ENCODE measurements at regions of chr1 and their contacts with region 1.

Region 1: DNA sequence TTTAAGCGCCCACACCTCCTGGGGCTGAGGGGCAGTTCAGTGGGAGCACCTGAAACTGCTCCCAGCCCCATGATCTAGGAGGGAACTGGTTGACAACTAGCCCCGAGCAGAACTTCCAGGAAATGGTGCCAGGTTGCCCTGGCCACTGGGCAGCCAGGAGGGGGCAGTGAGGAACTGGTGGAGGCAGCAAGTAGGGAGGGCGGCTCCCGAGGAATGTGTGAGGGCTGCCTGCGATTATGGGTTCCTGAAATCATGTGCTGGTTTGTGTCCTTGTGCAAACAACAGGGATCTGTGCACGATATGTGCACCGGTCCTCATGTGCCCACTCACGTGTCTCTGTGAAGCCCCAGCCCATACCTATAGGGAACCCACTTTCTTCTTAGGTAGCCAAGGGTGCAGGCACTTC is 9.9 kb downstream of the GPR3 start:
- DNase-seq: no peak
- H3K4me3 ChIP-seq: no peak overlapping the region
- H3K4me3 Mint-ChIP-seq: no peak overlapping the region
- H3K27ac Mint-ChIP-seq: no peak overlapping the region
- H3K4me1 ChIP-seq: peaks cover 8% of the 10 kb centered on the region; the same call in 1 of the 2 replicates
- H3K4me1 Mint-ChIP-seq: peaks cover 6% of the 10 kb centered on the region
- H3K27me3 ChIP-seq: no peaks in the 10 kb centered on the region
- H3K27me3 Mint-ChIP-seq: no peaks in the 10 kb centered on the region
- CTCF ChIP-seq: no peak

Region 2: GRCh38 chr1:26959722-26960615 is 442.4 kb before region 1 on chr1 and contains the start of gene KDF1:
- CTCF ChIA-PET with region 1: interaction called, 8 read pairs
- POLR2A ChIA-PET with region 1: interaction called, 13 read pairs
- intact Hi-C with region 1: no loop called
- DNase-seq: peak; percentile 87 to 92
- H3K4me3 ChIP-seq: peak within 1 kb of the TSS; percentile 90
- H3K4me3 Mint-ChIP-seq: peak within 1 kb of the TSS; percentile 84
- H3K27ac Mint-ChIP-seq: peak within 1 kb of the TSS; percentile 89
- H3K4me1 ChIP-seq: 0 out of 2 replicates have a peak, but pooled peaks cover 2% of the 10 kb centered on the region
- H3K4me1 Mint-ChIP-seq: no peaks in the 10 kb centered on the region
- H3K27me3 ChIP-seq: no peaks in the 10 kb centered on the region
- H3K27me3 Mint-ChIP-seq: no peaks in the 10 kb centered on the region
- CTCF ChIP-seq: peak; percentile 44 to 48
- total RNA-seq, gene KDF1: 13.5 and 14.1 TPM in 2 replicates

Region 3: DNA sequence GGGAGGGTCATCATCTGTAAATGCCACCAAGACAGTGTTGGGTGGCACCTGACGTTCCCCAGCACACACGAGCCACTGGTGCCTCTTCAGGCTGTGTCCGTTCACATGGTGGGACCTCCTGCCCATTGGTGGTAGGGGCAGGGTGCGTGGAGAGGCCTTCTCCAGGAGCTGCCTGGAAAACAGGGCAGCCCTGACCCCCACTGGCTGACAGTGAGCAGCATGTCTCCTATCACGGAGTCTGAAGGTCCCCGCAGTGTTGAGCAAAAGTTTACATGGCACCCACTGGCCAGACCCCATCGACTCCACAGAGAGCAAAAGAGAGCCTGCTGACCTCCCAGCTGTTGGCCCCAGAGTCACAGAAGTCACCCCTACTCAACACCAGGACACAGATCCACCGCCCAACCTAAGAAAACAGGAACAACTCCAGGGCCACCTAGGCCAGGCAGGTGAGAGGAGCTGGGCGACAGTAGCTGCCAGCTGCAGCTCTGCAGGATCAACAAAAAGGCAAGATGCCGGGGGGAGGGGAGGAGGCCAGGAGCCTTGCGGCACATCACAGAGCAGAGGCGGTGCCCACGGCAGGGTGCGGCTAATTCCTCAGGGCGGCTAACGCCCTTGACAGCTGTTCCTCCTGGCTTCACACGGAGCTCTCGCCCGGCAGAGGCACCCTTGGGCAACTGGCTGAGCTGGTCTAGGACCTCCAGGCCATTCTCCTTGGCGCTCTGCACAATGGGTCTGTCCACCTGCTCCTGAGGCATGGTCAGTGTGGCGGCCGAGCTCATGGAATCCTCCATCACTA is 284.1 kb after region 1 on chr1:
- CTCF ChIA-PET with region 1: no interaction called
- POLR2A ChIA-PET with region 1: no interaction called
- intact Hi-C with region 1: no loop called
- DNase-seq: no peak
- H3K4me3 ChIP-seq: no peak overlapping the region
- H3K4me3 Mint-ChIP-seq: no peak overlapping the region
- H3K27ac Mint-ChIP-seq: no peak overlapping the region
- H3K4me1 ChIP-seq: no peaks in the 10 kb centered on the region
- H3K4me1 Mint-ChIP-seq: peaks cover 22% of the 10 kb centered on the region
- H3K27me3 ChIP-seq: no peaks in the 10 kb centered on the region
- H3K27me3 Mint-ChIP-seq: no peaks in the 10 kb centered on the region
- CTCF ChIP-seq: no peak

Measured in Caco-2 (cell line).